ENCODE measurements at regions of chr12 and their contacts with region 1.

Region 1: GRCh38 chr12:122004633-122005071 is 17.0 kb upstream of the BCL7A start:
- DNase-seq: peak; percentile 51 to 67
- ATAC-seq: peak; percentile 16
- H3K4me3 ChIP-seq: no peak overlapping the region
- H3K27ac ChIP-seq: peak overlapping the region; percentile 71 to 97
- H3K4me1 ChIP-seq: peaks cover 0 to 2% of the 10 kb centered on the region in 2 donors
- H3K27me3 ChIP-seq: no peaks in the 10 kb centered on the region

Region 2: DNA sequence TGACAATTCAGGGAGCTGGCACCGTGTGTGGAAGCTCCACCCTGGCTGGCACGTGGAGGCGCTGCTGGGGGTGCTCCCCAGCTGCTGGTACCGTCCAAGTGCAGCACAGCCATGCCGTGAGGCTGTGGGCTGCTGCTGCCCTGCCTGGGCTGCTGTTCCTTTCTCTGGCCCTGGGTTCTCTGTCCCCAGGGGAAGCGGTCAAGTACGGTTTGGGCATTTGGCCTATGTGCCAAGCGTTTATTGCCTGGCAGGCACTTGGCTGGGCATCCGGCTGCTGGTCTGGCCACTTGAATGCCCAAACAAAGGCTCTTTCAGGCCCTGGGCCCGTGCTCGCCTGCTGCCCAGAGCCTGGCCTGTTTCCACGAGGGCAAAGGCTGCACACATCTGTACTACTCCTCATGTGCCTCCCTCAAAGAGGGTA is 250.8 kb before region 1 on chr12:
- intact Hi-C with region 1: no loop called
- DNase-seq: peak; percentile 81 to 88
- ATAC-seq: peak; percentile 75
- H3K4me3 ChIP-seq: no peak overlapping the region
- H3K27ac ChIP-seq: peak overlapping the region in 1 of 2 donors; percentile 41
- H3K4me1 ChIP-seq: no peaks in the 10 kb centered on the region
- H3K27me3 ChIP-seq: no peaks in the 10 kb centered on the region

Region 3: GRCh38 chr12:121964813-121965643 is 39.6 kb before region 1 on chr12:
- intact Hi-C with region 1: loop called in 1 of 2 experiments (anchors 5 kb)
- DNase-seq: no peak
- ATAC-seq: no peak
- H3K4me3 ChIP-seq: no peak overlapping the region
- H3K27ac ChIP-seq: no peak overlapping the region
- H3K4me1 ChIP-seq: no peaks in the 10 kb centered on the region
- H3K27me3 ChIP-seq: no peaks in the 10 kb centered on the region